Mammary epithelial cell (primary cell): ENCODE measurements at regions of chr6 and their contacts with region 1.

Region 1: GRCh38 chr6:63556369-63556768 is 15.9 kb upstream of the LOC128125822 start:
- DNase-seq: peak; percentile 41
- H3K4me3 ChIP-seq: no peak overlapping the region
- H3K27ac ChIP-seq: no peak overlapping the region
- H3K4me1 ChIP-seq: peaks cover 14% of the 10 kb centered on the region
- H3K27me3 ChIP-seq: no peaks in the 10 kb centered on the region
- CTCF ChIP-seq: no peak

Region 2: GRCh38 chr6:63537126-63537958 is 19.0 kb before region 1 on chr6:
- CTCF ChIA-PET with region 1: no interaction called
- dilution Hi-C with region 1: no loop called
- in situ Hi-C with region 1: no loop called
- intact Hi-C with region 1: loop called (anchors 2 kb)
- DNase-seq: peak; percentile 94
- H3K4me3 ChIP-seq: peak overlapping the region in 1 of 3 experiments; percentile 13
- H3K27ac ChIP-seq: peak overlapping the region; percentile 89
- H3K4me1 ChIP-seq: peaks cover 18% of the 10 kb centered on the region
- H3K27me3 ChIP-seq: no peaks in the 10 kb centered on the region
- CTCF ChIP-seq: no peak